Activated T-helper 1 cell treated with anti-CD3 and anti-CD28 coated beads, Interleukin-12 subunit alpha, Interleukin-12 subunit beta, Interleukin-2, Interleukin-4 antibody, amounts not matched to agents 30 ng/mL and 10 ng/mL and 1 ng/mL, durations not matched to agents 14 hours and 24 hours and 36 hours (primary cell): ENCODE measurements at regions of chr17 and their contacts with region 1.

Region 1: DNA sequence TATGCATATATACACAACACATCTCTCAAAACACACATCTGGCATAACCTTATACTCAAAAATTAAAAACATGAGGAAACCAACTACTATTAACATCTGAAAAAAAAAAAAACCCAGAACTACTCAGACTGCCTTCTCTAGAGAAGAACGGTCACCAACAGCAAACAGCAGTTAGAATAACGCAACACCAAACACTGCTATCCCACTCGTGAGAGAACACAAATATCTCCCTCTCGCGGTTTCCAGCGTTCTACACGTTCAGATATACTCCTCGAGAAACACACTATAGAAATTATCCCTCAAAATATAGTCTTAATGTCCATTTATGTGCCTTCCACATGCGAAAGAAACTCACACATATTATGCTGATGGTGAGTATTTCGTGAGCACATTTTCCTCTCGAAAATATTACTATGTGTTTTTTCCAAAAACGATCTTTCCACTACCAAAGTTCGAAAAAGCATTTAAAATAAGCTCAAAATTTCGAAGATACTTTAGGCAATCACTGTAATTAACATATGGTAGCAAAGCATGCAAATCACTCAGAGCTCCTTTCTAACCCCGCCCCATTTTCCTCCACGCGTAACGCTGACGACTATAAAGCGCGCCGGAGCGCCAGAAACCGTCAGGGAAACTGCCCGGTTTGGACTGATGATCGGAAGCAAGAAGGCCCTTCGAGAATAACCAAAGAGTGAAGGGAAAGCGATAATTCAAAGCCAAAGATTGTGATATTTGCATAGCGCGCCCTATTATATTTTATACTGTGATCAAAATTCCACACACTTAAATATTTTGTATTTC is 60.1 kb downstream of the TEX14 start:
- DNase-seq: peak; percentile 96
- H3K4me3 Mint-ChIP-seq: no peak overlapping the region
- H3K27ac Mint-ChIP-seq: no peak overlapping the region
- H3K4me1 Mint-ChIP-seq: peaks cover 4% of the 10 kb centered on the region
- H3K27me3 Mint-ChIP-seq: no peaks in the 10 kb centered on the region

Region 2: DNA sequence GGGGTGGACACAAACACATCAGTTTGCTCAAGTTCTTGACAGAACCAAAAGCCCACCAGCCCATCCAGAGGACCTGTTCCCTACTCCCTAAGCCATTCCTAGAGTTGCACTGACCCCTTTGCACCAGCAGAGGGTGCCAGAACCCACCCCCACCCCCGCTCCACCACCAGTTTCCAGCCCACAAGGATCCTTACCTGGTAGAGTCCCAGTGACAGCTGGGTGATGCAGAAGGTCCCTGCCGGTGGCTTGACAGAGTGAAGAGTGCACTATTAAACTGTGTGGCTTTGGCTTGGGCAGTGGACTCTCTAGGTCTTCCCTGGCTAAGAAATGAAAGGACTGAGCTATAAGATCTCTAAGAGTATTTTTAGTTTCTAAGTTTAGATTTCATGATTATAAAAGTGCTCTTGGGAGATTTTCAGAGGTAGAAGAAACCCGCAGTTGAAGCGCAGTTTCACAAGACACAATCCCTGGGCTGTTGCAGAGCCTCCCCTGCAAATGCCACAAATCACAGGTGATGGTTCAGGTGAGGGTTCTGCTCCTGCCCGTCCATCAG is 43.9 kb before region 1 on chr17:
- intact Hi-C with region 1: loop called (anchors 1 kb)
- DNase-seq: peak; percentile 15
- H3K4me3 Mint-ChIP-seq: no peak overlapping the region
- H3K27ac Mint-ChIP-seq: no peak overlapping the region
- H3K4me1 Mint-ChIP-seq: no peaks in the 10 kb centered on the region
- H3K27me3 Mint-ChIP-seq: peaks cover 2% of the 10 kb centered on the region

Region 3: DNA sequence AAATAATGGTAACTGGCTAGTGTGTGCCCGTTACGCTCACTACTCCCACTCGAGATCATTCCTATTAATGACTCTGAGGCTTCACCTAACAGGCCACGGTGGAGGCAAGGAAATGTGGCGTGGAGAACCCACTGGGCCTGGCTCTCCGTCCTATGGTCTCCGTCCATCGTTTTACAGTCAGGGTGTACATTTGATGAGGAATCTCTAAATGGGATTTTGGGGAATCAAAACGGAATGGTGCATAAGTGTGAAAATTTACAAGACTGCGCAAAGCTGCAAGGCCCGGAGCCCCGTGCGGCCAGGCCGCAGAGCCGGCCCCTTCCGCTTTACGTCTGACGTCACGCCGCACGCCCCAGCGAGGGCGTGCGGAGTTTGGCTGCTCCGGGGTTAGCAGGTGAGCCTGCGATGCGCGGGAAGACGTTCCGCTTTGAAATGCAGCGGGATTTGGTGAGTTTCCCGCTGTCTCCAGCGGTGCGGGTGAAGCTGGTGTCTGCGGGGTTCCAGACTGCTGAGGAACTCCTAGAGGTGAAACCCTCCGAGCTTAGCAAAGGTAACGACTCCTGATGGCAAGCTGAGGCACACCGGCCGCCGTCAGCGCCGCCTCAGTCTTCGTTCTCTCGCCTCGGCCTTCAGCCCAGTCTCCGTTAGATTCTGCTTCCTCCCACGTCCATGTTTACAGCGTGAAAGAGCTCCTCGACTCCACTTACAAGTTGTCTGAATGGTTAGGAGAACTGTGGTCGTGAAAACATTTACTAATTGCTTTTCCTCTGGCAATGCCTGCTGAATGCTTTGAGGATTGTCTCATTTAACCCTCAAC is 60.7 kb after region 1 on chr17 and contains the start of gene RAD51C:
- intact Hi-C with region 1: loop called (anchors 1 kb)
- DNase-seq: peak; percentile 86
- H3K4me3 Mint-ChIP-seq: peak within 1 kb of the TSS; percentile 97
- H3K27ac Mint-ChIP-seq: peak within 1 kb of the TSS; percentile 98
- H3K4me1 Mint-ChIP-seq: peaks cover 31% of the 10 kb centered on the region
- H3K27me3 Mint-ChIP-seq: no peaks in the 10 kb centered on the region
- total RNA-seq, gene RAD51C: 86.3 and 91.2 TPM in 2 replicates

Region 4: GRCh38 chr17:59004338-59005111 is 372.8 kb after region 1 on chr17:
- intact Hi-C with region 1: loop called (anchors 1 kb)
- DNase-seq: peak; percentile 44
- H3K4me3 Mint-ChIP-seq: peak overlapping the region; percentile 46
- H3K27ac Mint-ChIP-seq: peak overlapping the region; percentile 61
- H3K4me1 Mint-ChIP-seq: peaks cover 22% of the 10 kb centered on the region
- H3K27me3 Mint-ChIP-seq: no peaks in the 10 kb centered on the region

Region 5: GRCh38 chr17:59056857-59057256 is 425.1 kb after region 1 on chr17:
- intact Hi-C with region 1: no loop called
- DNase-seq: no peak
- H3K4me3 Mint-ChIP-seq: no peak overlapping the region
- H3K27ac Mint-ChIP-seq: no peak overlapping the region
- H3K4me1 Mint-ChIP-seq: no peaks in the 10 kb centered on the region
- H3K27me3 Mint-ChIP-seq: no peaks in the 10 kb centered on the region

Region 6: DNA sequence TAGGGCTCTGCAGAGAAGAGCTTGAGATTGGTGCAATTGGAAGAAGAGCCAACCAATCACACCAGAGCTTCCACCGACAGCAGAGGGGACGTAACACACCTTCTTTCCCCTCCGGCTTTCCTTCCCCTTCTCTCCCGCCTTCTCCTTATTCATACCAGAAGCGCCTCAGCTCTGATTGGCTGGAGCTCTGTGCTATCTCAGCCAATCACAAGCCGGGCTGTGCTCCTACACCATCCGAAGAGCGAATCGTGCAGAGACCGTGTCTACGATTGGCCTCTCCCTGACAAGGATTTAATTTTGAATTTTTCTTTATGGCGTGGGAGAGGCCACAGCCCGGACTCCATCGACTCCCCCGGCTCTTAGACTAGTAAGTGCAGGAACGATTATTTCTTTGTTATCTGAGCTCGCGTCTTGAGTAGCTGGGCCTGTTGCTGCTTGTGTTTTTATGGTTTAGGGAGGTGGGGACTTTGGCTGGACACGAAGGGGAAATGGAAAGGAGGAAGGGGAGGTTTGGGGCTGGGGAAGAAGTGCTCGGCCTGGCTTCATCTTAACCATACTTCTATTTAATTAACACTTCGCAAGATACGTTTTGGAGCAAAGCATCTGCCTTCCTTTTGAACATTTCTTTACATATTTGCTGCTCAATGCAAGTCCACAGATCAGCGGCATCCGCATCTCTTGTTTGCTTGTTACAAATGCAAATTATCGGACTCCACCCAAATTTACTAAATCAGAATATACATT is 523.9 kb after region 1 on chr17 and contains the start of gene PRR11:
- intact Hi-C with region 1: loop called (anchors 1 kb)
- DNase-seq: peak; percentile 94
- H3K4me3 Mint-ChIP-seq: no peak within 1 kb of the TSS
- H3K27ac Mint-ChIP-seq: no peak within 1 kb of the TSS
- H3K4me1 Mint-ChIP-seq: peaks cover 63% of the 10 kb centered on the region
- H3K27me3 Mint-ChIP-seq: no peaks in the 10 kb centered on the region
- total RNA-seq, gene PRR11: 29.4 and 32.7 TPM in 2 replicates